GM10248 (cell line): ENCODE measurements at regions of chr5 and their contacts with region 1.

Region 1: DNA sequence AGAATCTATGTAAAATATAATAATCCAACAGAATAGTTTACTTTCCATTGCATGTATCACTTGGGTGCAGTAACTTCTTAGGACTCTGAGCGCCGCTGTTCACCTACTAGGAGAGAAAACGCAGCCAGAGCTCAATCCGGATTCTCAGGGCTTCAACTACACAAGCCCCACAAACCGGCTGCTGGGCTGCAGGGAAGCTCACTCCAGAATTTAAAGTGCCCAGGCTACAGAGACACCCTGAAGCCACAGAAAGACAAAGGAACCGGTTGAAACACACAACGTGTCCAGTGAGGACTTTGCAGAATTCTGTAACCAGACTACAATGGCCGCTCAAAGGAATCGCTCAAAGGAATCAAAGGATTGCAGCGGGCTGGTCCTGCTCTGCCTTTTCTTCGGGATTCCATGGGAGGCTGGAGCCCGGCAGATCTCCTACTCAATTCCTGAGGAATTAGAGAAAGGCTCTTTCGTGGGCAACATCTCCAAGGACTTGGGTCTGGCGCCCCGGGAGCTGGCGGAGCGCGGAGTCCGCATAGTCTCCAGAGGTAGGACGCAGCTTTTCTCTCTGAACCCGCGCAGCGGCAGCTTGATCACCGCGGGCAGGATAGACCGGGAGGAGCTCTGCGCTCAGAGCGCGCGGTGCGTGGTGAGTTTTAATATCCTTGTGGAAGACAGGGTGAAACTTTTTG is at the start of gene PCDHGA10:
- DNase-seq: peak; percentile 73
- CTCF ChIP-seq: peak; percentile 77

Region 2: DNA sequence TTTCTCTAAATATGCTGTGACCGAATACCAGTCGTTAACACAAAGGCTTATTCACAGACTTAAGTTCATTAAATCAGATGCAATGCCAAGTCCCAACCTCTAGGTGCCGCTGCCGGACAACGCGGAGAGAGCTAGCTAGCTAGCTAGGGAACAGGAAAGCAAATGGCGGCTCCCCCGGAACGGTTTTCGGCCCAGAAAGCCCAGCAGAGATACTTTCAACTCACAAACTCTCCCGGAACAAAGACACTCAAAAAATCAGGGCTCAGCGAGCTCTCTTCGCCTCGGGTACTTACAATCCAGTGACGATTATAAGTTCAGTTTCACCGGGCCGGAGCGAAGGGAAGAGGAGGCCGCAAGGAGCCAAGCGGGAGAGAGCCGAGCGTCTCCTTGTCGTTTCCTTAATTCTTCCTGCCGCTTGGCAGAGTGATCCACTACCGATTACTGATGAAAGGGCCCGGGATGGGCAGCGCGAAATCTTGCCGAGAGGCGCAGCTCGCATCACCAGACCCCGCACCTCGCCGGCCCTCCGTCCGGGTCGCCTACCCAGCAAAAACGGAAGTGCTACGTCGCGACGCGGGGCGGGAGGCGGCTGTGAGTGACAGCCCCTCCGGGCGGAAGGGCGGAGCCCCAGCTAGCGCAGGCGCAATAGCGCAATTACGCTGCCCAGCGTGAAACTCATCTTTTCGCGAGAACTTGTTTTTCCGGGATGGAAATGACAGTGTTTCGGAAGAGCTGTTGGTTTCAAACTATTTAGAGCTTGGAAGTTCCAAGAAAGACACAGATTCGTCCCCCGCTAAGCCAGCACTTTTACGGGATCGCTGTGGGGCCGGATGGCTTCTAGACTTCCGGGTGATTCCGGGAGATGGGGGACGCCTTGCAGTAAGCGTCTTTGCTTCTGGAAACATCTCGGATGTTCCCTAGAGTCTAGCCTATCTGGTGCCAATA is 92.5 kb before region 1 on chr5 and contains the start of gene TAF7:
- CTCF ChIA-PET with region 1: interaction called, 25 read pairs
- POLR2A ChIA-PET with region 1: no interaction called
- DNase-seq: peak; percentile 93
- CTCF ChIP-seq: peak; percentile 95

Region 3: DNA sequence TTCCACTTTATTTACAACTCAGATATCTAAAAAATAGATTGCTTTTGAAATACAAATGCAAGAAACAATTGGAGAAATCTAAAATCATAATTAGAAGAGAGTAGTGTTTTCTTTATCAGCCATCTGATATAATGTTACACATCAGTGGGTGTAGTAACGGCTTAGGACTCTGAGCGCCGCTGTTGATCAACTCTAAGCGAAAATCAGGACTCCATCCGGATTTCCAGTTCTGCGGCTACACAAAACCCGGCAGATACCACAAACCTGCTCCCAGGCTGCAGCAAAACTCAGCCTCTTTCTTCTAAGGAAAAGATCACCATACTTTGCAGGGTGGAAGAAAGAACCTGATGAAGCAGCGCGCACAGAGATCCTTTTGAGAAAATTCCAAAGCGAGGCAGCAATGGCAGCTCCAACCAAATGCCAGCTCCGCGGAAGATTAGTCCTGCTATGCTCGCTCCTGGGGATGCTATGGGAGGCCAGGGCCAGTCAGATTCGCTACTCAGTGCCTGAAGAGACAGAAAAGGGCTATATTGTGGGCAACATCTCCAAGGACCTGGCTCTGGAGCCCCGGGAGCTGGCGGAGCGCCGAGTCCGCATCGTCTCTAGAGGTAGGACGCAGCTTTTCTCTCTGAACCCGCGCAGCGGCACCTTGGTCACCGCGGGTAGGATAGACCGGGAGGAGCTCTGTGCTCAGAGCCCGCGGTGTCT is 10.3 kb before region 1 on chr5 and contains the start of gene PCDHGA9:
- CTCF ChIA-PET with region 1: interaction called, 23 read pairs
- POLR2A ChIA-PET with region 1: no interaction called
- DNase-seq: no peak
- CTCF ChIP-seq: peak; percentile 15

Region 4: DNA sequence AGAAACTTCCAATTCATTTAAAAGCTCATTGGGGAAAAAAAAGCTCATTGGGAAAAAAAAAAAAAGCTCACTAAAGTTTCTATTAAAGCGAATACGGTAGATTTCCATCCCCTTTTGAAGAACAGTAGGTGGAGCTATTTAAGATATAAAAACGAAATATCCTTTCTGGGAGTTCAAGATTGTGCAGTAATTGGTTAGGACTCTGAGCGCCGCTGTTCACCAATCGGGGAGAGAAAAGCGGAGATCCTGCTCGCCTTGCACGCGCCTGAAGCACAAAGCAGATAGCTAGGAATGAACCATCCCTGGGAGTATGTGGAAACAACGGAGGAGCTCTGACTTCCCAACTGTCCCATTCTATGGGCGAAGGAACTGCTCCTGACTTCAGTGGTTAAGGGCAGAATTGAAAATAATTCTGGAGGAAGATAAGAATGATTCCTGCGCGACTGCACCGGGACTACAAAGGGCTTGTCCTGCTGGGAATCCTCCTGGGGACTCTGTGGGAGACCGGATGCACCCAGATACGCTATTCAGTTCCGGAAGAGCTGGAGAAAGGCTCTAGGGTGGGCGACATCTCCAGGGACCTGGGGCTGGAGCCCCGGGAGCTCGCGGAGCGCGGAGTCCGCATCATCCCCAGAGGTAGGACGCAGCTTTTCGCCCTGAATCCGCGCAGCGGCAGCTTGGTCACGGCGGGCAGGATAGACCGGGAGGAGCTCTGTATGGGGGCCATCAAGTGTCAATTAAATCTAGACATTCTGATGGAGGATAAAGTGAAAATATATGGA is 17.5 kb after region 1 on chr5 and contains the start of gene PCDHGA12:
- CTCF ChIA-PET with region 1: interaction called, 24 read pairs
- POLR2A ChIA-PET with region 1: no interaction called
- DNase-seq: peak; percentile 85
- CTCF ChIP-seq: peak; percentile 9

Region 5: DNA sequence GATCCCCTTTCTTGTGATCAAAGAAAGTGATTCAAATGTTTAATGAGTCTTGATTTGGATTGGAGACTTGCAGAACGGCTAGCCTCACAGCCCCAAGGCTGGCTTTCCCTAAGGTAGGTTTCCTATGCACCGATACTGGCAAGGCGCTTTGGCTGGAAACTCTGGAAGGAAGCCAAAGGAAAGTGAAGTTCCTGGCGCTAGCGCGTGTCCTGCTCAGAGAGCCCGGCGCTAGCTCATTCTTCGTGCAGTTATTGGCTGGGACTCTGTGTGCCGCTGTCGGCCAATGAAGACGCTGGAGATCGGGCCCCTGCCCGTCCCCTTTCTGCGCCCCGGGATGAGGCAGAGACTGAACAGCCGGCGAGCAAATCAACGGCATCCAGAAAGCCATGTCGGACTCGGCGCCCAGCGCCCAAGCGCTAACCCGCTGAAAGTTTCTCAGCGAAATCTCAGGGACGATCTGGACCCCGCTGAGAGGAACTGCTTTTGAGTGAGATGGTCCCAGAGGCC is 62.7 kb after region 1 on chr5 and contains the start of gene PCDHGC3:
- CTCF ChIA-PET with region 1: interaction called, 11 read pairs
- POLR2A ChIA-PET with region 1: no interaction called
- DNase-seq: peak; percentile 89
- CTCF ChIP-seq: peak; percentile 75

Region 6: GRCh38 chr5:141512390-141512910 is 99.5 kb after region 1 on chr5:
- CTCF ChIA-PET with region 1: interaction called, 174 read pairs
- POLR2A ChIA-PET with region 1: no interaction called
- DNase-seq: peak; percentile 85
- CTCF ChIP-seq: peak; percentile 79